CD4-positive, alpha-beta memory T cell (primary cell): ENCODE measurements at regions of chr3 and their contacts with region 1.

Region 1: GRCh38 chr3:196639483-196640296 is at the start of gene NRROS:
- DNase-seq: peak; percentile 47 to 73 (median 52)
- H3K4me3 ChIP-seq: peak within 1 kb of the TSS; percentile 75 to 89
- H3K4me3 Mint-ChIP-seq: peak within 1 kb of the TSS; percentile 80 to 95 (median 92)
- H3K27ac ChIP-seq: peak within 1 kb of the TSS; percentile 77
- H3K27ac Mint-ChIP-seq: peak within 1 kb of the TSS; percentile 75 to 97 (median 95)
- H3K4me1 ChIP-seq: peaks cover 71% of the 10 kb centered on the region
- H3K4me1 Mint-ChIP-seq: peaks cover 48 to 91% (median 67%) of the 10 kb centered on the region in 4 donors
- H3K27me3 ChIP-seq: no peaks in the 10 kb centered on the region
- H3K27me3 Mint-ChIP-seq: no peaks in the 10 kb centered on the region
- total RNA-seq, gene NRROS: 18.7 to 20.0 TPM

Region 2: GRCh38 chr3:196585044-196585757 is 54.5 kb before region 1 on chr3:
- CTCF ChIA-PET with region 1: no interaction called
- POLR2A ChIA-PET with region 1: no interaction called
- intact Hi-C with region 1: no loop called
- DNase-seq: no peak
- H3K4me3 ChIP-seq: no peak overlapping the region
- H3K4me3 Mint-ChIP-seq: no peak overlapping the region
- H3K27ac ChIP-seq: no peak overlapping the region
- H3K27ac Mint-ChIP-seq: peak overlapping the region in 2 of 7 donors; percentile 32 to 47
- H3K4me1 ChIP-seq: no peaks in the 10 kb centered on the region
- H3K4me1 Mint-ChIP-seq: peaks cover 0 to 2% (median 0%) of the 10 kb centered on the region in 4 donors
- H3K27me3 ChIP-seq: no peaks in the 10 kb centered on the region
- H3K27me3 Mint-ChIP-seq: no peaks in the 10 kb centered on the region

Region 3: DNA sequence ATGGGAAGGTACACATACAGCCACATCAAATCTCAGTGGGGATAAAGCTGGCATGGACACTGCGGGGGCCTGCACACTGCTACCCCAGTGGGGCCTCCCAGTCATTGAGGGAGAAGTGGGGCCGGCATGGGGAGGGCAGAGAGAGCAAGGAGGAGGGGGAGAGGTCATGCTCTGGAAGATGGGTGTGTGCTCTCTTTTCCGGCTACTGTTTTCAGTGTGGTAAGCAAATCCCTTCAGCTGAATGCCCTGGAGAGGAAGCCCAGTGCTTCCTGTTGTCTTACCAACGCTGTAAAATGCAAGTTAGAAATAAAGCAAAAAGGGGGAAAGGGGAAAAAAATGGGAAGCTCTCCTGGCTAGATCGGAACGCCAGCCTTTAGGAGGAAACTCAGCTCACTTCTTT is 30.6 kb after region 1 on chr3:
- CTCF ChIA-PET with region 1: interaction called, 3 read pairs
- POLR2A ChIA-PET with region 1: interaction called, 26 read pairs
- intact Hi-C with region 1: loop called (anchors 5 kb)
- DNase-seq: no peak
- H3K4me3 ChIP-seq: peak overlapping the region in 1 of 2 donors; percentile 23
- H3K4me3 Mint-ChIP-seq: peak overlapping the region; percentile 66 to 84 (median 81)
- H3K27ac ChIP-seq: peak overlapping the region; percentile 23
- H3K27ac Mint-ChIP-seq: peak overlapping the region; percentile 67 to 96 (median 90)
- H3K4me1 ChIP-seq: peaks cover 25% of the 10 kb centered on the region
- H3K4me1 Mint-ChIP-seq: peaks cover 15 to 44% (median 28%) of the 10 kb centered on the region in 4 donors
- H3K27me3 ChIP-seq: no peaks in the 10 kb centered on the region
- H3K27me3 Mint-ChIP-seq: no peaks in the 10 kb centered on the region

Region 4: DNA sequence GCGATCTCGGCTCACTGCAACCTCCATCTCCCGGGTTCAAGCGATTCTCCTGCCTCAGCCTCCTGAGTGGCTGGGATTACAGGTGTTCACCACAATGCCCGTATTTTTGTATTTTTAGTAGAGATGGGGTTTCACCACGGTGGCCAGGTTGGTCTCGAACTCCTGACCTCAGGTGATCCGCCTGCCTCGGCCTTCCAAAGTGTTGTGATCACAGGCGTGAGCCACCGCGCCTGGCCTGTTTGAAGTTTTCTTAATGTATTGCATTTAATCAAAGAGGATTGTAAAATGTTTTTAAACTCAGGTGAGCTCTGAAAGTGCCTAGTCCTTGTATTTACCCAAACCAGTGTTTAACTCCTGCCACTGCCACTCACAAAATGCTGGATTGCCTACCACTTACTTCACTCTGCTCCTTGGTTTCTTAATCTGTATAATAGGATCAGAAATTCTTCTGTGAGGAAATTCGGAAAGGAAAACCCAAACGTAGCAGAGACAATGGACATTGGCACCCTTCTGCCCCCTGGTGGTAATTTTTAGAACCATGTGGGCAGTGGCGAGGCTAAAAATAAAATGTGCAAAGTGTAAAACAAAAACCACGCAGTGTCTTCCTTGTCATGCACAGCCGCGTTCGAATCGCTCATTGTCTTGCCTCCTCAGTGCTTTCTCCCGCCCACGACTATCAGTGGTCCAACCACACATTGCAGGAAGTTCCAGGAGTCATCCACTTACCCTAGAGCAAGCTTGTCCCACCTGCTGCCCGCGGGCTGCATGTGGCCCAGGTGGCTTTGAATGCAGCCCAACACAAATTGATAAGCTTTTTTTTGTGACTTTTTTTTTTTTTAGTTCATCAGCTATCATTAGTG is 45.1 kb after region 1 on chr3:
- CTCF ChIA-PET with region 1: interaction called, 22 read pairs
- POLR2A ChIA-PET with region 1: interaction called, 22 read pairs
- intact Hi-C with region 1: no loop called
- DNase-seq: peak; percentile 61 to 75 (median 65)
- H3K4me3 ChIP-seq: peak overlapping the region in 1 of 2 donors; percentile 40
- H3K4me3 Mint-ChIP-seq: peak overlapping the region; percentile 39 to 80 (median 70)
- H3K27ac ChIP-seq: no peak overlapping the region
- H3K27ac Mint-ChIP-seq: peak overlapping the region in 5 of 7 donors; percentile 19 to 81 (median 64)
- H3K4me1 ChIP-seq: peaks cover 11% of the 10 kb centered on the region
- H3K4me1 Mint-ChIP-seq: peaks cover 10 to 16% (median 14%) of the 10 kb centered on the region in 4 donors
- H3K27me3 ChIP-seq: no peaks in the 10 kb centered on the region
- H3K27me3 Mint-ChIP-seq: no peaks in the 10 kb centered on the region